GM10248 (cell line): ENCODE measurements at regions of chr16 and their contacts with region 1.

Region 1: DNA sequence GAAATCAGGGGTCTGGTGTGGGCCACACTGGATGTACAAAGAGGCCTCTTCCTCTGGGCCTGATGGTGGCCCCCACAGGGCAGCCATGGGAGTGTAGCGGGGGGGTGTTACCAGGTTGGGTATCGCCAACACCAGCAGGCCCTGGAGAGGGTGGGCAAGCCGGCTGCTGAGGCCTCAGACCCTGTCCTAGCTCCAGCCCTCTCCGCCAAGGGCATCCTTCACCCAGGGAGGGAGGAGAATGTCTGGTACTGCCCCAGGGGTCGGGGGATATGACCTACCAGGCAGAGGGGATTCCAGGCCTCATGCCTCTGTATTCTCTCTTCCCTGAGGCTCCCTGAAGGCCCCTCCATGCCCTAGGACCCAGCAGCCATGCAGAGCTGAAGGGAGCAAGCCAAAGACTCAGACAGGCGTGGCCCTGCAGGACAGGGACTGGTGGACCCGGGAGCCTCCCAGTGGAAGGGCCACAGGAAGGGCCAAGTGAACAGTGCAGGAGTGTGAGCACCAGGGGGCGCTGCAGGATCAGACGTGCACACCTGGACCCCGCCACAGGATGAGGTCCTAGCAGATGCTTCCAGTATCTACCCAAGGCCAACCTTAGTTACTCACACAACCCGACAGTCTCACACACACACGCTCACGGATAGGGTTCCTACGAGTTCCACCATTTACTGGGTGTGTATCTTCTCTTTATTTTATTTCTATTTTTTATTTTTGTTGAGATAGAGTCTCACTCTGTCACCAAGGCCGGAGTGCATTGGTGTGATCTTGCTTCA is 10.9 kb upstream of the CES4A start:
- DNase-seq: peak; percentile 90
- CTCF ChIP-seq: peak; percentile 93

Region 2: GRCh38 chr16:66961065-66961744 is 16.3 kb before region 1 on chr16 and contains the start of gene CES3:
- CTCF ChIA-PET with region 1: interaction called, 15 read pairs
- POLR2A ChIA-PET with region 1: no interaction called
- DNase-seq: peak; percentile 73
- CTCF ChIP-seq: peak; percentile 86

Region 3: DNA sequence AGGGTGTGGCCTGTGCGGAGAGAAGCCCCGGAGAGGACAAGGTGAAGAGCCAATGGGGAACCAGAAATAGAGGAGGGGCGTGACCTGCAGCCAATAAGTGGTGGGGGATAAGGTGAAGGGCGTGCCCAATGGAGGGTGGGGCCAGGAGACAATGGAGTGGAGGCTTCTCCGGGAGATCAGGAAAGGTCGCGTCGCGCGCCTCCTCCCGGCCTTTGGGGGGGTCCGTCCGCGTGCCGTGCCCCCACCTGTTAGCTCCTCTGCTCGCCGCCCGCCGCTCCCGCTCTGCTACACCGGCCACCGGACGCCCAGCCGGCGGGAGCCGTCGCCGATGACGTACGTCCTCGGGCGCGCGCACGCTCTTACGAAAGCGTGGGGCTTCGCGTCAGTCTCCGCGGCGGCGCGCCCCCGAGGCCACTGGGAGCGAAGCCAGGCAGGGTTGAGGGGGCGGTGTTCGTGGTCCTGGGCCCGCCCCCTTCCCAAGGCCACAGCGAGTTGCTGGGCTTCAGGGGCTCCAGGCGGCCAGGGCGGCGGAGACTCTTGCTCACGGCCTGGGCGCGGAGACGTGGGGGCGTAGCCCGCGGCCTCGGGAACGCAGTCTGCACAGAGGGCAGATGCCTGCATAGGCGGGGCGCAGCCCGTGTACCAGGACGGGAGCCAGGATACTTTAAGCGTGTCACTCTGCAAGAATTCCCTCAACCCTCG is 206.3 kb after region 1 on chr16 and contains the start of gene MATCAP1:
- CTCF ChIA-PET with region 1: interaction called, 24 read pairs
- POLR2A ChIA-PET with region 1: no interaction called
- DNase-seq: peak; percentile 99
- CTCF ChIP-seq: no peak